Activated B cell treated with CpG ODN at 0.5 μM for 24 hours (primary cell): ENCODE measurements at regions of chr9 and their contacts with region 1.

Region 1: DNA sequence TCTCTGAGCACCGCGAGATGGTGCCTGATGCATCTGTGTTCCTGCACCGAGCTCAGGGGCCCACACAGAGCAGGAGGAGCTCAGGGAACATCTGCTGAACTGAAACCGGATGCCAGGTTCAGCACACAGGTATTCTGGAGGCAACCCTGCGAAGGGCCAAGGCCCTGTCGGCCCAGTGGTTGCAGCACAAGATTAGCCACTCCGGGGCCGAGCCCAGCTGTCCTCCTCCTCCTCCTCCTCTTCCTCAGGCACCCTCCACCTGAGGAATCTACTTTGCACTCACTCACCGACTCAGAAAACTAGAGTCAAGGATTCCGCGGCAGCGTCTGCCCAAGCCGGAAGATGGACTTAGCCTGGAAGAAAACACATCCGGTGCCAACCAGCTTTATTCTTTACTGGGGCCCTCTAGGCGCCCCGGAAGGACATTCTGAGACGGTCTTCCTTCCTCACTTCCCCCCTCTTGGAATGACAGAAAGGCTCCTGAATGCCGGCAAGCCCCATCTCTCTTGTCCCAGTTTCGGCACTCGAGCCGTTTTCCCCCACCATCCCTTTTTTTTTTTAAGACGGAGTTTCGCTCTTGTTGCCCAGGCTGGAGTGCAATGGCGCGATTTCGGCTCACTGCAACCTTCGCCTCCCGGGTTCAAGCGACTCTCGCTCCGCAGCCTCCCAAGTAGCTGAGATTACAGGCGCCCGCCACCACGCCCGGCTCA is at the start of gene ZBTB6:
- DNase-seq: peak; percentile 66
- ATAC-seq: peak; percentile 94
- H3K4me3 Mint-ChIP-seq: peak within 1 kb of the TSS; percentile 99
- H3K27ac Mint-ChIP-seq: peak within 1 kb of the TSS; percentile 99
- H3K4me1 Mint-ChIP-seq: peaks cover 31% of the 10 kb centered on the region
- H3K27me3 Mint-ChIP-seq: no peaks in the 10 kb centered on the region
- CTCF ChIP-seq: no peak
- total RNA-seq, gene ZBTB6: 15.3 and 15.5 TPM in 2 replicates

Region 2: GRCh38 chr9:122827761-122828093 is 85.4 kb before region 1 on chr9:
- CTCF ChIA-PET with region 1: no interaction called
- POLR2A ChIA-PET with region 1: interaction called, 15 read pairs
- intact Hi-C with region 1: loop called (anchors 1 kb)
- DNase-seq: no peak
- ATAC-seq: peak; percentile 0
- H3K4me3 Mint-ChIP-seq: peak overlapping the region; percentile 88
- H3K27ac Mint-ChIP-seq: peak overlapping the region; percentile 91
- H3K4me1 Mint-ChIP-seq: peaks cover 13% of the 10 kb centered on the region
- H3K27me3 Mint-ChIP-seq: no peaks in the 10 kb centered on the region
- CTCF ChIP-seq: no peak

Region 3: DNA sequence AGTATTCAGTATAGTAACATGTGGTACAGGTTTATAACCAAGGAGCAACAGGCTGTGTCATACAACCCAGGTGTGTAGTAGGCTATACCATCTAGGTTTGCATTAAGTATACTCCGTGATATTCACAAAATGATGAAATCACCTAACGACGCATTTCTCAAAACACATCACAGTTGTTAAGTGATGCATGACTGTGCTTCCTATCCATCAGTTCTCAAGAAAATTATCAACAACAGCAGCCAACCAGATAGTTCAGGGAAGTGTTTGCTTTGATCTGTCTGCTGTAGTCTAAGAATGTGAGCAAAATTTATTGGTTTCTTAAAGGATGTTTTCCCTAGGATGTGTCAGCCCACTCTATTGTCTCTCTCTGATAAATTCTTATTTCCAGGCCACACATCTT is 10.8 kb after region 1 on chr9:
- CTCF ChIA-PET with region 1: no interaction called
- POLR2A ChIA-PET with region 1: interaction called, 96 read pairs
- intact Hi-C with region 1: no loop called
- DNase-seq: no peak
- ATAC-seq: peak; percentile 83
- H3K4me3 Mint-ChIP-seq: no peak overlapping the region
- H3K27ac Mint-ChIP-seq: peak overlapping the region; percentile 32
- H3K4me1 Mint-ChIP-seq: peaks cover 19% of the 10 kb centered on the region
- H3K27me3 Mint-ChIP-seq: no peaks in the 10 kb centered on the region
- CTCF ChIP-seq: no peak

Region 4: GRCh38 chr9:122931226-122932121 is 18.4 kb after region 1 on chr9 and contains the start of gene ZBTB26:
- CTCF ChIA-PET with region 1: interaction called, 3 read pairs
- POLR2A ChIA-PET with region 1: interaction called, 96 read pairs
- intact Hi-C with region 1: loop called (anchors 1 kb)
- DNase-seq: peak; percentile 80
- ATAC-seq: peak; percentile 98
- H3K4me3 Mint-ChIP-seq: no peak within 1 kb of the TSS
- H3K27ac Mint-ChIP-seq: peak within 1 kb of the TSS; percentile 90
- H3K4me1 Mint-ChIP-seq: peaks cover 22% of the 10 kb centered on the region
- H3K27me3 Mint-ChIP-seq: no peaks in the 10 kb centered on the region
- CTCF ChIP-seq: no peak
- total RNA-seq, gene ZBTB26: 9.7 and 11.9 TPM in 2 replicates

Region 5: DNA sequence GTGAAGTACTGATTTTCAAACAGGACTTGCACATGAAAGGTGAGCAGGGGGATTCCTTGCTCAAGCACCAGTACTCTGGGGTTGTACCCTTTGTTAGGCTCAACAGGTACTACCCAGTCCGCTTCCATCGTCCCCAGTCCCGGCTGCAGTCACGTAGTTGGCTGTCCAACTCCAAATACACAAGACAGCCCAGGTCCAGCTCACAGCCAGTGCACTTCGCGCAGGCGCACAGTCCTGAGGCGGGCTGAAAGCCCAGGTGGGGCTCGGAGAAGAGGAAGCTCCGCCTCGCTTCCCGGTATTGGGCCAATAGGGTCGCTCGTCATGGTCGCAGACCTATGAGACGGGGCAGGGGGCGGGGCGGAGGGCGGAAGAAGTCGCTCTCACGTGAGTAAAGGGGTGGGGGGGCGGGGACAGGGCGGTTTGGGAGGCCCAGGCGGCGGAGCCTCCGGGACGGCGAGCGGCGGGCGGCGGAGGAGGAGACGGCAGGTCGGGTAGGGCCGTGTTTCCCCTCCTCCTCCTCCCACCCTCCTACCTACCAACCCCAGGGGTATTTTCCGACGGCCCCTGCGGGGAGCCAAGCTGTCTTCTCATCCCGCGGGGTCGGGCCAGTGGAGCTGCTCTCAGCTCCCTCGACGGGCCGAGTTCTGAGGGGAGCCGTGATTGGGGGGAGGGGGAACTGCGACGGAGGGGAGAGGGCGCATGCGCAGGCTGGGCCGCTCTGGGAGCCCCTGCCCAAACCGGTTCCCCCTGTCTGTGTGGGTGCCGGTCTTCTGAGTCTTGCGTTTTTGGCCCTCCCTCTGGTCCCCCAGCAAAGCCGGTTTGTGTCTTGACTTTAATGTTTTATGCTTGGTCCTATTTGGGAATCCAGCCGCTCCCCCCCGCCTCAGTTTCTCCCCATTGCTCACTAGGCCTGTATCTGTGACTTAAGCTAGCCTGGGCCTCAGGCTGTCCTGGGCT is 27.8 kb after region 1 on chr9 and contains the start of gene RABGAP1:
- CTCF ChIA-PET with region 1: interaction called, 7 read pairs
- POLR2A ChIA-PET with region 1: interaction called, 48 read pairs
- intact Hi-C with region 1: loop called (anchors 1 kb)
- DNase-seq: peak; percentile 89
- ATAC-seq: peak; percentile 98
- H3K4me3 Mint-ChIP-seq: peak within 1 kb of the TSS; percentile 93
- H3K27ac Mint-ChIP-seq: peak within 1 kb of the TSS; percentile 79
- H3K4me1 Mint-ChIP-seq: peaks cover 27% of the 10 kb centered on the region
- H3K27me3 Mint-ChIP-seq: no peaks in the 10 kb centered on the region
- CTCF ChIP-seq: no peak
- total RNA-seq, gene RABGAP1: 47.4 and 58.1 TPM in 2 replicates

Region 6: DNA sequence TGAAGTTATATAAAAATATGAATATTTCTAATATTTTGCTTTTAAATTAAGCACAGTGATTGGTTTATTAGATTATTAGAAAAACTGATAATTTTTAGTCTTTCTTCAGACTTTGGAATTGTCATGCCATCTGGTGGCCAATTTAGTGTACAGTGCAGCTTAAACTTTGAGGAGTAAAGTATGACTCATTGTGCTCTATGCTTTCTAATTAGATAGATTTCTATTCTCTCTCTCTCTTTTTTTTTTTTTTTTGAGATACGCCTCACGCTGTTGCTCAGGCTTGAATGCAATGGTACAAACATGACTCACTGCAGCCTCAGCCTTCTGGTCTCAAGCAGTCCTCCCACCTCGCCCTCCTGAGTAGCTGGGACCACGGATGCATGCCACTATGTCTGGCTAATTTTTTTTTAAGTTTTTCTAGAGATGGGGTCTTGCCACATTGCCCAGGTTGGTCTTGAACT is 78.3 kb after region 1 on chr9:
- CTCF ChIA-PET with region 1: interaction called, 5 read pairs
- POLR2A ChIA-PET with region 1: interaction called, 6 read pairs
- intact Hi-C with region 1: loop called (anchors 1 kb)
- DNase-seq: no peak
- ATAC-seq: peak; percentile 95
- H3K4me3 Mint-ChIP-seq: no peak overlapping the region
- H3K27ac Mint-ChIP-seq: no peak overlapping the region
- H3K4me1 Mint-ChIP-seq: peaks cover 4% of the 10 kb centered on the region
- H3K27me3 Mint-ChIP-seq: no peaks in the 10 kb centered on the region
- CTCF ChIP-seq: no peak

Region 7: GRCh38 chr9:123129423-123129822 is 216.3 kb after region 1 on chr9:
- CTCF ChIA-PET with region 1: no interaction called
- POLR2A ChIA-PET with region 1: no interaction called
- intact Hi-C with region 1: no loop called
- DNase-seq: no peak
- ATAC-seq: no peak
- H3K4me3 Mint-ChIP-seq: no peak overlapping the region
- H3K27ac Mint-ChIP-seq: peak overlapping the region; percentile 69
- H3K4me1 Mint-ChIP-seq: peaks cover 18% of the 10 kb centered on the region
- H3K27me3 Mint-ChIP-seq: no peaks in the 10 kb centered on the region
- CTCF ChIP-seq: no peak